ENCODE measurements at regions of chr3 and their contacts with region 1.

Region 1: GRCh38 chr3:186783073-186783730 is at the start of gene EIF4A2:
- DNase-seq: peak; percentile 93
- ATAC-seq: peak; percentile 71
- H3K4me3 Mint-ChIP-seq: peak within 1 kb of the TSS; percentile 100
- H3K27ac Mint-ChIP-seq: peak within 1 kb of the TSS; percentile 100
- H3K4me1 Mint-ChIP-seq: peaks cover 39% of the 10 kb centered on the region
- H3K27me3 Mint-ChIP-seq: peaks cover 2% of the 10 kb centered on the region
- total RNA-seq, gene EIF4A2: 374 to 441 TPM

Region 2: GRCh38 chr3:186772701-186773424 is 10.3 kb before region 1 on chr3:
- CTCF ChIA-PET with region 1: interaction called, 17 read pairs
- DNase-seq: peak; percentile 88
- ATAC-seq: peak; percentile 95
- H3K4me3 Mint-ChIP-seq: peak overlapping the region; percentile 78
- H3K27ac Mint-ChIP-seq: peak overlapping the region; percentile 88
- H3K4me1 Mint-ChIP-seq: peaks cover 22% of the 10 kb centered on the region
- H3K27me3 Mint-ChIP-seq: no peaks in the 10 kb centered on the region

Region 3: DNA sequence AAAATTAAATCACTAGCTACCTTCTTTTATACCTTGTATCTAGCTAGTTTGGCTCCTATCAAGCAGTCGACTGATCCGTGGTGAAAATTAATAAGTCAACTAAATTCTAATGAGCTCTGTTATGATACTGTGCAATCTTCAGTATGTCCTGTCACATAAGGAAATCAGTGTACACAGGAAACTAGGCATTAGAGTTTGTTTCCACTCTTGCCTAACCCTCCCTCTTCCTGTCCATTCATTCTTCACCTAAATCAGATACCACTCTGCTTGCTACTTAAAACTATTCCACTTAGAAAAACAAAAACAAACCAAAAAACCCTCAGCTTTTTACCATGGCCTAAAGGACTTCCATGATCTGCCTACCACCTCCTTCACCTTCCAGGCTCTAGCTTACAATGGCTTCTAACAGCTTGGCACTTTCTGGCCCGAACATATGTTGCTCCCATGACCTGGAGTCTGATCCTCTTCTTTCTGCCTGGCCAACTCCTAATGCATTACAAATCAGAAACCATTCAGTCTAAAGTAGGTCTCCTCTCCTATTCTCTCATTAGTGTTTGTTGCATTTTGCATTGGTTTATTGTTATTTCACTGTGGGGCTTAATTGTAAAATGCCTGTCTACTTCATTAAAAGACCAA is 15.2 kb after region 1 on chr3:
- CTCF ChIA-PET with region 1: interaction called, 11 read pairs
- DNase-seq: no peak
- ATAC-seq: peak; percentile 50
- H3K4me3 Mint-ChIP-seq: no peak overlapping the region
- H3K27ac Mint-ChIP-seq: peak overlapping the region; percentile 50
- H3K4me1 Mint-ChIP-seq: peaks cover 47% of the 10 kb centered on the region
- H3K27me3 Mint-ChIP-seq: no peaks in the 10 kb centered on the region

Measured in activated CD8-positive, alpha-beta memory T cell treated with anti-CD3 and anti-CD28 coated beads, Interleukin-2, amount 10 ng/mL, durations not matched to agents 7 days and 5 days (primary cell).